ENCODE measurements at regions of chr18 and their contacts with region 1.

Region 1: DNA sequence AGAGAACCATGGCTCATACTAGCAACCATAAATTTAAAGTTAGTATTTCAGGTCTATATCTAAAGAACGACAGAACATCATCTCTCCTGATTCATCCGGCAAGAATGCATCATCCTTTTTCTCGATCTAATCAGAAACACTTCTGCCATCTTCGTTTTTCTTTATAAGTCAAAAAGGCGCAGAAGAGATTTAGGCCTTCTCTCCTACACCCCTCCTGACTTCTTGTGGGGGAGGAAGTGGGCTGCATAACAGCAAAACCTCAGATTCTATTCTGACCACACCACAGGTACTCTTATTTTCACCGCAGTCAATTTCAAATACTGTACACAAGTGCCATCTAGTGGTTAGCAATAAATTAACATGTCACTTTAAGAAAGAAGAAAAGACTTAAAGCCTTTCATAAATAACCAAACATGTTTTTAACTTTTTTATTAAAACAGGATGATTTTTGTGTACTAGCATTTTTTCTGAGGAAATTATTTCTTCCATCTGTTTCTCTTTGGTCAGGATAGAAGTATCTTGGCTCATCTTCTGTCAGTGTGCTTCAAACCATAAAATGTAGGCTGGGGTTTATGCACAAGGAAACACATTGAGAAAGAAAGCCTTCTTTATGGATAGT is 48.4 kb upstream of the PIK3C3 start:
- DNase-seq: peak; percentile 52
- CTCF ChIP-seq: peak; percentile 51

Region 2: GRCh38 chr18:41731885-41732284 is 174.8 kb before region 1 on chr18:
- CTCF ChIA-PET with region 1: no interaction called
- POLR2A ChIA-PET with region 1: no interaction called
- DNase-seq: no peak
- CTCF ChIP-seq: no peak

Region 3: GRCh38 chr18:41753826-41754225 is 152.8 kb before region 1 on chr18:
- CTCF ChIA-PET with region 1: no interaction called
- POLR2A ChIA-PET with region 1: no interaction called
- DNase-seq: no peak
- CTCF ChIP-seq: no peak

Region 4: GRCh38 chr18:41893432-41893831 is 13.2 kb before region 1 on chr18:
- CTCF ChIA-PET with region 1: interaction called, 12 read pairs
- POLR2A ChIA-PET with region 1: no interaction called
- DNase-seq: no peak
- CTCF ChIP-seq: no peak

Region 5: DNA sequence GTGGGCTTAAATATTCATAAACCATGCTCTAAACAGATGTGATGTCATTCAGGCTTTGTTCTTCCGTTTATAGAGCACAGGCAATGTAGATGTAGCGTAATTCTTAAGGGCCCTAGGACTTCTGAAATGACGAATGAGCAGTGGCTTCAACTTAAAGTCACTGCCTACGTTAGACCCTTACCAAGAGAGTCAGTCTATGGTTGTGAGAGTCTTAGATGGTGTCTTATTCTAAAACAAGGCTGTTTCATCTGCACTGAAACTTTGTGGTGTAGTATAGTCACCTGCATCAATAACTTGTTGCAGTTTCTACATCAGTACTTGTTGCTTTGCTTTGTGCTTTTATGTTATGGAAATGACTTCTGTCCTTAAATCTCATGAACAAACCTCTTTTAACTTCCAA is 104.4 kb after region 1 on chr18:
- CTCF ChIA-PET with region 1: no interaction called
- POLR2A ChIA-PET with region 1: no interaction called
- DNase-seq: peak; percentile 18
- CTCF ChIP-seq: no peak

Region 6: DNA sequence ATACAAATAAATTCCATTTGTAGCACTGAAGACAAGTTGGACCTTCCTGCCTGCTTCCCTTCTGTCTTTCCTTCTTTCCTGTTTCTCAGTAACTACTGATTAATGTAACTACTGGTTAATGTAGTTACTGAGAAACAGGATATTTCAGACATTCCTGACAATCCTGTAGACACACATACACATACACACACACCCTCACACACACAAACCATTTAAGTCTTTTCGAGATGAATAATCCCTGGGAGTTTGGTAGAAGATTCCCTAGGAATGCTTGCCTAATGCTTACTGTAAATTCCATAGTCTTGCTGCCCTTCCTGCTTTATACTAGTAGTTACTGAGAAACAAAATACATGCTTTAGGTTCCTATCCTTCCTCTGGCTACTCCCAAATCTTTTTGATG is 132.3 kb after region 1 on chr18:
- CTCF ChIA-PET with region 1: no interaction called
- POLR2A ChIA-PET with region 1: no interaction called
- DNase-seq: no peak
- CTCF ChIP-seq: no peak

Measured in GM10248 (cell line).